ENCODE measurements at regions of chr1 and their contacts with region 1.

Region 1: DNA sequence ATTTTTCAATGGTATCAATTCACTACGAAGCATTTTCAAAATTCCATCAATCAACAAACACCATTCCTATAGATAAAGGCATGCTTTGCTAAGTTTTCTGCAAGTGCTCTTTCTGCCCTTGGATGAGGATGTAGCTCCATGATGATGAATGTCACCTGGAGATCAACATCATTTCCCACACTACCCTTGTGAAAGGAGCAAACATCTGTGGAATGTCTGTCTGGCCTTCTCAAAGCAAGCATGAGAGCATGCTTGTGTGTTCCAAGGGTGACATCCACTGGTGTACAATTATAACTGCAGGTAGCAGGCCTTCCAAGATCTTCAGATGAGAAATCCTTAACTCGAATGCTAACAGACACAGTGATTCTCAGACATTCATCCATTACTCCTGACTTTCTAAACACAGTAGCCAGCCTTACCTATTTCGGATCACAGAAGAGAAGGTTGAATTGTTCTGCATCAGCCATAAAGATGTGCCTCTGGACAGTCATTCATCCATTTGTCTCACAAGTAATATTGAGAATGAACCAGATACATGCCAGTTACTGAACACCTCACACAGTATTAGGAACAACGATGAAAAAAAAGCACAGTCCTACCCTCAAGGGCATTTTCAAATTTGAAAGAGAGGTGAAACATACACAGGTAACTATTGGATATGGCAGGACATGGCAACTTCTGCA is 162.4 kb downstream of the TPR start:
- DNase-seq: no peak
- ATAC-seq: peak; percentile 92 to 95
- H3K4me3 ChIP-seq: no peak overlapping the region
- H3K27ac ChIP-seq: no peak overlapping the region
- H3K4me1 ChIP-seq: no peaks in the 10 kb centered on the region
- H3K27me3 ChIP-seq: no peaks in the 10 kb centered on the region

Region 2: DNA sequence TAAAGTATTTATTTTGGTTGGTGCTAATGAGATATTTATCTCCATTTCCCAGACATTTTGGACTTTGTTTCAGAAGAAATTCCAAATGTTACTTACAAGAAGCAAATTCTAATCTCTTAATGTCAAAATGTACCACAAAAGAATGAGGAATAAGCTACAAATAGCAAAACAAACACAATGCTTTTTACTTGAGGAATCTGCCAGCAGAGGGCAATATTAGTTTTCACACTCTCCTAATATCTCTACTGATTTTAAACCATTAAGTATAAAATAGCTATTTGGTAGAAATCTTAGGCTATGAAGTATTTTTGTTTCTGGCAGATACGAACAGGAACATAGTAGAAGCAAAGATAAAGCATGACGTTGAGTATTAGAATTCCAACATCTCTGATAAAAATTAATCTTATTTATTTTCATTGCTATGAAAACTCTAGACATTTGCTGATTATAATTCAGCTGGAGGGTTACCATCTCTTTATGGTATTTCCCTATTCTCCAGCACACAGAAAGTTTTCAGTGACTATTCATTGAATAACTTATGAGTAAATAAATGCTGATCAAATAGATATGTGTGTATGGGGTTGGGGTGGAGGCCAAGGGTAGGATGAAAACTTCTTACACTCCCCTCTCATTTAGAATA is 491.9 kb before region 1 on chr1:
- intact Hi-C with region 1: loop called (anchors 5 to 10 kb)
- DNase-seq: no peak
- ATAC-seq: peak; percentile 83 to 87
- H3K4me3 ChIP-seq: no peak overlapping the region
- H3K27ac ChIP-seq: no peak overlapping the region
- H3K4me1 ChIP-seq: no peaks in the 10 kb centered on the region
- H3K27me3 ChIP-seq: no peaks in the 10 kb centered on the region

Region 3: DNA sequence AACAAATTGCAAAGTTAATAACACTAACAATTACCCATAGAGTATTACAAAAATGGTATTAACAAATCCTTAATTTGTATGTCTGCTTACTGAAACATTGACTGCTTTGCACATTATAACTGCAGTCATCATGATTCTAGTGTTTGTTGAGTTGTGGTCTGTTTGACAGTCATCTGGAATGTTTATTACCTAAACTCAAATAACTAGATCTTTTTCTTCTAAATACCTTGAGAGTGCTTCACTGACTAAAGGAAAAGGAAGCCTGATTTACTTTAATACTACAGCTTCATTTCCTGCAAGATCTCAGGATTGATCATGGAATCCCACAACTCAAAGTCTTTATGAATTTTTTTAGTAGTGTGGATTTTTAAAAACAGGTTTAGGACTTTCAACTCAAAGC is 408.5 kb before region 1 on chr1:
- intact Hi-C with region 1: loop called in 1 of 4 experiments (anchors 10 kb)
- DNase-seq: no peak
- ATAC-seq: no peak
- H3K4me3 ChIP-seq: no peak overlapping the region
- H3K27ac ChIP-seq: no peak overlapping the region
- H3K4me1 ChIP-seq: no peaks in the 10 kb centered on the region
- H3K27me3 ChIP-seq: no peaks in the 10 kb centered on the region

Region 4: DNA sequence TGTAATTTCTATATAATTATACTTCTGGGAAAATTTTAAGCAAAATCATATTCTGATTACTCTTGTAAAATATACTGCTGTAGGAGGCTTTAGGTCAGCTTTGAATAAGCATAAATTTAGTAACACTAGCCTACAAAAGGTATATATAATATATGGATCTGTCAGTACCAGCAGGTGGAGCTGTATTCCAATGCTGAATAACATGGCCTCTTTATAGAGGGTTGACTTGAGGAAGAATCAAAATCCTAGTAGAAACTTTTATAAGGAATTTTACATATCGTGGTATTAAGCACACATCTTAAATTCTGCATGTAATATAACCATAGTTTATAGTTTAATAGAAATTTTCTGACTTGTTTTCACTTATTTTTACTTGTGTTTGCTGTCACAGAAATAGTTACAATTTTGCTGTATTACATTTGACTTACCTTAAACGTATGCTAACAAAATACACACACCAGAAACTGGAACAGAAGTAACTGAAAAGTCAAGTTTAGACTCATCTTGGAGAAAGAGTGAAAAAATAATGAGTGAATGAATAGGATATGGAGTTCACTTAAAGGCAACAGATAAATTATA is 399.2 kb before region 1 on chr1:
- intact Hi-C with region 1: loop called (anchors 5 to 10 kb)
- DNase-seq: no peak
- ATAC-seq: no peak
- H3K4me3 ChIP-seq: no peak overlapping the region
- H3K27ac ChIP-seq: no peak overlapping the region
- H3K4me1 ChIP-seq: no peaks in the 10 kb centered on the region
- H3K27me3 ChIP-seq: no peaks in the 10 kb centered on the region

Region 5: DNA sequence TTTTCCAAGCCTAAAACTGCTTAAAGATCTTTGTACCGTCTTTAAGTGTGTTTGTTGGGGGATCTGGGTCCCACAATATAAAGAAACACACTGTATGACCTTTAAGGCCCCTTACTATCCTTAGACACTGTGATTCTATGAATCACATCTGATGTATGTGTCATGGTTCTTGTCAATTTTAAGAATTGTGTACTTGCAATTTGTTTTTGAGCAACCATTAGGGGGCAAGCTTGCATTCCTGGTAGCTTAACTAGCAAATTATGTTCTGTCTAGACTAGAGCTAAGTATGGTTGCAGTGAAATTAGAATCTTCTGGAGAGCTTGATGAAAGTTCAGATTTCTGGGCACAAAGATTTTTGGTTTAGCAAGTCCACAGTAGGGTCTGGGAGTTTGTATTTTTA is 57.1 kb before region 1 on chr1:
- intact Hi-C with region 1: loop called in 1 of 4 experiments (anchors 10 kb)
- DNase-seq: no peak
- ATAC-seq: peak in 1 of 2 donors; percentile 28
- H3K4me3 ChIP-seq: no peak overlapping the region
- H3K27ac ChIP-seq: no peak overlapping the region
- H3K4me1 ChIP-seq: no peaks in the 10 kb centered on the region
- H3K27me3 ChIP-seq: no peaks in the 10 kb centered on the region

Region 6: DNA sequence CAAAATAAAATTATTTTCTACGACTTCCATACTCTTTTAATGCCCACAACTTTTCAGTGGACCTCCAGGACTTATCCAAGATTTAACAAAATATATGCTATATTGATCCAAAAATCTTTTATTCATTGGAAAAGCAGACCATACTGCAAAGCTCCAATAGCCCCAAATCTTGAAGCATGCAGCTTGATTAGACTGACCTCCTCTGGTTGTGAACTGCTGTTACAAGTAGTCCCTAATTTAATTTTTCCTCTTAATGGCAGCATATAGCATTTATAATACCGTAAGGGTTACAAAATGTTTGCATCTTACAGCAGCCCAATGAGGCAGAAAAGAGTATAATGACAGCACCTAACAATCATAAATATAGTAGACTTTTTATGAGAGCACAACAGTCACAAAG is 112.6 kb after region 1 on chr1:
- intact Hi-C with region 1: no loop called
- DNase-seq: no peak
- ATAC-seq: no peak
- H3K4me3 ChIP-seq: no peak overlapping the region
- H3K27ac ChIP-seq: no peak overlapping the region
- H3K4me1 ChIP-seq: no peaks in the 10 kb centered on the region
- H3K27me3 ChIP-seq: no peaks in the 10 kb centered on the region

Measured in right cardiac atrium (tissue), 5 donors.